ENCODE measurements at regions of chr22 and their contacts with region 1.

Region 1: GRCh38 chr22:26579331-26579886 is 10.5 kb downstream of the TPST2 start:
- DNase-seq: no peak
- H3K4me3 ChIP-seq: no peak overlapping the region
- H3K27me3 ChIP-seq: no peaks in the 10 kb centered on the region
- CTCF ChIP-seq: no peak

Region 2: GRCh38 chr22:26553056-26553752 is 26.2 kb before region 1 on chr22:
- CTCF ChIA-PET with region 1: interaction called, 4 read pairs
- POLR2A ChIA-PET with region 1: interaction called, 17 read pairs
- DNase-seq: peak; percentile 46
- H3K4me3 ChIP-seq: no peak overlapping the region
- H3K27me3 ChIP-seq: no peaks in the 10 kb centered on the region
- CTCF ChIP-seq: no peak

Region 3: DNA sequence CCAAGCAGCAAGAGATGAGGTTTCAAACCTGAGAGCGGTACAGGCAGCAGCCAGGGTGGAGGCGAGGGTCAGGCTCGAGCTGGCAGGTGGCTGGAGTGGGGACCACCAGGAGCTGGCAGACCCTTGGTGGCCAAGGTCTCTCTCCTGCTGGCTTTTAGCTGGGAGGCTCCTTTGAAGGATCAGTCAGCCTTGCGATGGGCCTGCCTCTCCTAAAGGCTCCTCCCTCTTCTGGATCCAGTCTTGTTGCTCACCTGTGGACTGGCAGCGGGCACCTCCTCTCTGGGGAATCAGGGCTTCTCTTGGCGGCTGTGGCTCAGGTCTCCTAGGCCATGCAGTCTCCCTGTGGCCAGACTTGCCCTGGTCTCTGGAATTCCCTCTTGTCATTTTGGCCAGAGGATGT is 14.2 kb before region 1 on chr22:
- CTCF ChIA-PET with region 1: no interaction called
- POLR2A ChIA-PET with region 1: no interaction called
- DNase-seq: no peak
- H3K4me3 ChIP-seq: no peak overlapping the region
- H3K27me3 ChIP-seq: no peaks in the 10 kb centered on the region
- CTCF ChIP-seq: no peak

Region 4: DNA sequence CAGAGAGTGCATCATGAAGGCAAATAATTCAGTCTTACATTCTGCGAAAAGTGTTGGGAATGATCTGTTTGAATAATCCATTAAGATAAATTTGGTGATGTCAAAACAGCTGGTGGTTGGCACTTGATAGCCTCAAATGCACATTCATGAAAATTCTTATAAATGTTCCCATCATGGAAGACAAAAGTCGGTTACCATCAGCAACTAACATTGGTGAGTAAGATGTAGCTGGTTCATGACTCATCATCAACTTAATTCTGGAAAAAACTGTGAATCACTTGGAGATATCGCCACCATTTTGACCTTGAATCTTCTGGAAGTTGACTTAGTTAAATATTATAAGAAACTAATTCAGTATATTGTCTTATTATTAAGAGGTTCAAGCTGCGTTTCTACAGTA is 27.2 kb after region 1 on chr22:
- CTCF ChIA-PET with region 1: no interaction called
- POLR2A ChIA-PET with region 1: no interaction called
- DNase-seq: no peak
- H3K4me3 ChIP-seq: no peak overlapping the region
- H3K27me3 ChIP-seq: no peaks in the 10 kb centered on the region
- CTCF ChIP-seq: no peak

Region 5: GRCh38 chr22:26740253-26740652 is 160.8 kb after region 1 on chr22:
- CTCF ChIA-PET with region 1: no interaction called
- POLR2A ChIA-PET with region 1: no interaction called
- DNase-seq: no peak
- H3K4me3 ChIP-seq: no peak overlapping the region
- H3K27me3 ChIP-seq: no peaks in the 10 kb centered on the region
- CTCF ChIP-seq: no peak

Measured in BJ (cell line).